ENCODE measurements at regions of chr7 and their contacts with region 1.

Region 1: DNA sequence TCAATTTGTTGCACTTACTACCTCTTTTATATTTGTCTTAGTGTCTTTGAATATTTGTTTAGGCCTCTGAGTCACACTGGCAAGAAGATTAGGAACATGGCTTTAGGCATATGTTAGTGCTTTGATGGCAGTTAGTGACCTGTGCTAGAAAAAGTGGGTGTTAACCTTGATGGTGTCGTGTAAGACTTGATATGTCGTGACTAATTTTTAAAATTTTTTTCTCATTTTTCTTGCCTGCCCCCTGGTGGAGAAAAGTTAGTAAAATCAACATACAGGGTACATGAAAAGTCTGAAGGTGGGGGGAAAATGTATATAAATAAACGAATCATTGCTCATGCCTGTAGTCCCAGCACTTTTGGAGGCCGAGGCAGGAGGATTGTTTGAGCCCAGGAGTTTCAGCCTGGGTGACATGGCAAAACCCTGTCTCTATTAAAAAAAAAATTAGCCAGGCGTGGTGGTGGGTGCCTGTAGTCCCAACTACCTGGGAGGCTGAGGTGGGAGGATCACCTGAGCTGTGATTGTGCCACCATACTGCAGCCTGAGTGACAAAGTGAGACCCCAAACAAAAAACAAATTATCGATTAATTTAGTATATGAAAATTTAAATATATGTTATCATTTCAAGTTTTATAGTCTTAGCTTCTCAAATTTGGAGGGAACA is 44.6 kb downstream of the TAX1BP1 start:
- DNase-seq: peak in 5 of 14 experiments; percentile 1 to 71 (median 55)
- ATAC-seq: peak; percentile 63
- H3K4me3 ChIP-seq: no peak overlapping the region
- H3K4me3 Mint-ChIP-seq: no peak overlapping the region
- H3K27ac ChIP-seq: no peak overlapping the region
- H3K27ac Mint-ChIP-seq: no peak overlapping the region
- H3K4me1 ChIP-seq: no peaks in the 10 kb centered on the region
- H3K4me1 Mint-ChIP-seq: peaks cover 17% of the 10 kb centered on the region
- H3K27me3 ChIP-seq: no peaks in the 10 kb centered on the region
- H3K27me3 Mint-ChIP-seq: no peaks in the 10 kb centered on the region
- CTCF ChIP-seq: peak; percentile 73

Region 2: GRCh38 chr7:27745064-27745583 is 39.4 kb before region 1 on chr7:
- CTCF ChIA-PET with region 1: no interaction called
- POLR2A ChIA-PET with region 1: no interaction called
- intact Hi-C with region 1: loop called in 1 of 2 experiments (anchors 5 kb)
- DNase-seq: peak in 3 of 14 experiments; percentile 10 to 31 (median 27)
- ATAC-seq: no peak
- H3K4me3 ChIP-seq: no peak overlapping the region
- H3K4me3 Mint-ChIP-seq: peak overlapping the region; percentile 52
- H3K27ac ChIP-seq: no peak overlapping the region
- H3K27ac Mint-ChIP-seq: no peak overlapping the region
- H3K4me1 ChIP-seq: peaks cover 18% of the 10 kb centered on the region
- H3K4me1 Mint-ChIP-seq: peaks cover 68% of the 10 kb centered on the region
- H3K27me3 ChIP-seq: no peaks in the 10 kb centered on the region
- H3K27me3 Mint-ChIP-seq: no peaks in the 10 kb centered on the region
- CTCF ChIP-seq: peak; percentile 27

Measured in CD4-positive, alpha-beta T cell (primary cell).